PC-3 (cell line): ENCODE measurements at regions of chr3 and their contacts with region 1.

Region 1: DNA sequence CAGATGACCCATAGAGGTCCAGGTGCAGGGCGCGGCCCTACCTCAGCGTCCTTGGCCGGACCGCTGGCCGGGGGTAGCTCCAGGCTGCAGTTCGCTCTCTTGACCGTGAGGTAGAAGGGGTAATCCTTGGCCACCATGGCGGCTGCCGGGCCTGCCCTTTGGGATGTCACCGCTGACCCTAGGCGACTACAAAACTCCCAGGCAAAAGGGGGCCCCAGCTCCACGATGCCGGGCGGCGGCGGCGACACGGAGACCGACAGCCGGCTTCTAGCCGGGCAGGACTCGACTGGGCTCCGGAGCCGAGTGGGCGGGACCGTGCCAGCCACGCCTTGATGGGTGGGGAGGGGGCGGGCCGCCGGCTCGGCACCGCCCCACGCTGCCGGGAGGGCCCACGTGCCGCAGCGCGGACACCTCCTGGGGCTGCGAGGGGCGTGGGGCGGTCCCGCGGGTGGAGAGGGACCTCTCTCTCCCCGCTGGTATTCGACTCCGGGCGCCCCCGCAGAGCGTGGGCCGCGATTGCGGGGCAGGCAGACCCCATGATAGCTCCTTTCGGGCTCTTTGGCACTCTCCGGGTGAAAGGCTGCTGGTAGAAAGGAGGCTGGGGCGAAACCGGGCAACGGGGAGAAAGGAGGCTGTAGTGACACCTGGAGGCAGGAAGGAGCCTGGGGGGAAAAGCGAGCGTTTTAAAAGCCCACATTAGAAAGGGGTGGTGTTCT is at the start of gene ARHGEF3:
- DNase-seq: peak; percentile 88
- ATAC-seq: peak; percentile 91
- H3K4me3 ChIP-seq: peak within 1 kb of the TSS; percentile 73
- H3K27ac ChIP-seq: 0 out of 2 replicates have a peak within 1 kb of the TSS, but pooled peaks have one; percentile 31
- H3K4me1 ChIP-seq: peaks cover 21% of the 10 kb centered on the region
- H3K27me3 ChIP-seq: no peaks in the 10 kb centered on the region
- CTCF ChIP-seq: peak; percentile 71
- total RNA-seq, gene ARHGEF3: 8.7 and 12.6 TPM in 2 replicates

Region 2: GRCh38 chr3:56720849-56721248 is 81.0 kb before region 1 on chr3:
- CTCF ChIA-PET with region 1: no interaction called
- POLR2A ChIA-PET with region 1: no interaction called
- intact Hi-C with region 1: no loop called
- DNase-seq: no peak
- ATAC-seq: peak; percentile 31; the same call in 1 of the 2 replicates
- H3K4me3 ChIP-seq: no peak overlapping the region
- H3K27ac ChIP-seq: no peak overlapping the region
- H3K4me1 ChIP-seq: no peaks in the 10 kb centered on the region
- H3K27me3 ChIP-seq: no peaks in the 10 kb centered on the region
- CTCF ChIP-seq: no peak

Region 3: DNA sequence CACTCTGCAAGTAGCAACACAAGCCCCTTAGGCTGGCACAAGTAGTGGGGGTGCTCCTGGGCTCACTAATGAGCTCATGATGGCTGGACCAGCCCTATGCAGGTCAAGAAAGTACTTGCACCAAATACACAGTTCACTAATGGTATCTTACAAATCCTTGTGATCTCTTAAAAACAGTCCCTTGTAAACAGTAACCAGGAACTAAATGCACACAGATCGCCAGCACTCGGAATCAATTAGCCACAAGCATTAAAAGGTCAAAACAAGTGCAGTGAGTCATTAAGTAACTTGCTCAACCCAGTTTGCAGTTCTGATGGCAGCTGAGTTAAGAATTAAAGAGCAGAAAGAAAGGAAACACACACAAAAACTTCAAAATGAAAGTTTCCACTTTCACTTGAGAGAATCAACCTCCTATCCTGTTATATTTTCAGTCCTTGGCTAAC is 43.3 kb before region 1 on chr3:
- CTCF ChIA-PET with region 1: interaction called, 3 read pairs
- POLR2A ChIA-PET with region 1: interaction called, 3 read pairs
- intact Hi-C with region 1: loop called (anchors 1 kb)
- DNase-seq: peak; percentile 84
- ATAC-seq: peak; percentile 98
- H3K4me3 ChIP-seq: no peak overlapping the region
- H3K27ac ChIP-seq: peak overlapping the region; percentile 18
- H3K4me1 ChIP-seq: peaks cover 10% of the 10 kb centered on the region
- H3K27me3 ChIP-seq: no peaks in the 10 kb centered on the region
- CTCF ChIP-seq: no peak

Region 4: DNA sequence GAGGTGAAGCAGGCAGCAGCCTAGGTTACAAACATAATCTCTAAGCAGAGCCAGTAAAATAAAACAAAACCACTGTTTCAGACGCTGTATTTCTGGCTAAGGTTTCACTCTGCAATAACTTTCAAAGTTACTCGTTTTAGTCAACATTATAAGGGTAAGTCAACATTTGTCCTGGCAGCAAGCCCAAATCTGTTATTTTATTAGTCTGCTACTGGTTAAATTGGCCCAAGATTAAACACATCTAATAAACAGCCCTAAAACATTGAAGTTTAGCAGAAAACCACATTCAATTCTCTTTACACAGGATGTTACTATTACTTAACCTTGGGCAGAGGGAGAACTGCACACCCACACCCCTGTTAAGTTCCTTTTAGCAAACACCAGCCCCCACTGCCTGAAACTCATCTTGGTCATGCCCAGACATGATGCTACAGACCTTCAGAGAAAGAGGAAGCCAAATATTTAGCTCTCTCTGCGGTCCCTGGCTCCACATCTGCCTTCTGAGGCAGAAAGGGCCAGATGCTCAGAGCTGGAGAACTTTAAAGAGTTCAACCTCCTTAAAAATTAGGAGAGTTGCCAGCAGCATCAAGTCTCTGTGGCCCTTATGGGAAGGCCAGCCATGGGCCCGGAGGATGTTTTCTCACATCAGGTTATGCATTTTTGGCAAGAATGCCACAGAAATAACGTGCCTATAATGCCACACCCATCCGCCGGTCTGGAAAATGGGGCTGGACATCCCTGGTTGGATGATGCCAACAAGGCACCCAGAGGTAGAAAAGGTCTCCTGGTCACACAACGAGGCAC is 18.0 kb before region 1 on chr3:
- CTCF ChIA-PET with region 1: interaction called, 5 read pairs
- POLR2A ChIA-PET with region 1: no interaction called
- intact Hi-C with region 1: loop called (anchors 2 kb)
- DNase-seq: peak; percentile 97
- ATAC-seq: peak; percentile 95
- H3K4me3 ChIP-seq: no peak overlapping the region
- H3K27ac ChIP-seq: peak overlapping the region; percentile 35
- H3K4me1 ChIP-seq: peaks cover 23% of the 10 kb centered on the region
- H3K27me3 ChIP-seq: no peaks in the 10 kb centered on the region
- CTCF ChIP-seq: no peak

Region 5: DNA sequence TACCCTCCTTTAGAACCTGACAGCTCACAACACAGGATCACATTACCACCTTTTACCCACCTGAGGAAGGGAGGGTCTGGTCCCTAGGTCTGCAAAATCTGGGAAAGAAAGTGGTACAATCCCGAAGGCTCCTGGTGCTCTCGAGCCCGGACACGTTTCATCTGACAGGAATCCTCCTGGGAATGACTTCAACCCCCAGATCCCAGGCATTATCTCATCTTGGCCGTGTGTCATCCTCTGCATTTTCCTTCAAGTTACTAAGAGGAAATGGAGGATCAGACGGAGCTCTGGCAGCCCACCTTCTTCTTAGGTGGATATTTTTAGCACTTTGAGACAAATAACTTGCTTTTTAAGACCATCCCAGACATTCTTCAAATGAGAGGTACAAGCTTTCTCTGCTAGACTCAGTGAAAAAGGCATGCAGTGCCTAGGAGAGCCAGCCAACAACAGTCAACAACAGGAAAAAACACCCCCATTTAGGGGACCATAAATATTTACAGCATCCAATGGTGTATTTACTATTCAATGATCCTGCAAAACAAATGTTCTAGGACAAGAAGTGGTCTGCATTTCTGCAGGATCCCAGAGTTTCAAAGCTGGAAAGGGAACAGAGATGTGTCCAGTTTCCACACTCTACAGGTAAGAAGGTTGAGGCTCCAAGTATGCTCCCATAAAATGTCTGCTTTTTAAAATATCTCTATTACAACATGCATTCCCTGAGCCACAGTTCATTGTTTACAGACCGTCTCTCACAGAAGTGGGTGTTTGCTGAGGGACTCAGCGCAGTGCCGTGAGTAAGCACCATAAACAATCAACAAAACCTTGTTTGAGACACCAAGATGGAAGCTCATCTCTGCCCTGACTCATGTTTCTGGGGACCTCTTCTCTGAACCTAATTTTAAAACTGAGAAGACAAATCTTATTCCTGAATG is 38.2 kb after region 1 on chr3:
- CTCF ChIA-PET with region 1: interaction called, 3 read pairs
- POLR2A ChIA-PET with region 1: interaction called, 4 read pairs
- intact Hi-C with region 1: loop called (anchors 1 kb)
- DNase-seq: peak; percentile 92
- ATAC-seq: peak; percentile 94
- H3K4me3 ChIP-seq: peak overlapping the region; percentile 11; the same call in 1 of the 2 replicates
- H3K27ac ChIP-seq: peak overlapping the region; percentile 87
- H3K4me1 ChIP-seq: peaks cover 34% of the 10 kb centered on the region
- H3K27me3 ChIP-seq: no peaks in the 10 kb centered on the region
- CTCF ChIP-seq: no peak

Region 6: DNA sequence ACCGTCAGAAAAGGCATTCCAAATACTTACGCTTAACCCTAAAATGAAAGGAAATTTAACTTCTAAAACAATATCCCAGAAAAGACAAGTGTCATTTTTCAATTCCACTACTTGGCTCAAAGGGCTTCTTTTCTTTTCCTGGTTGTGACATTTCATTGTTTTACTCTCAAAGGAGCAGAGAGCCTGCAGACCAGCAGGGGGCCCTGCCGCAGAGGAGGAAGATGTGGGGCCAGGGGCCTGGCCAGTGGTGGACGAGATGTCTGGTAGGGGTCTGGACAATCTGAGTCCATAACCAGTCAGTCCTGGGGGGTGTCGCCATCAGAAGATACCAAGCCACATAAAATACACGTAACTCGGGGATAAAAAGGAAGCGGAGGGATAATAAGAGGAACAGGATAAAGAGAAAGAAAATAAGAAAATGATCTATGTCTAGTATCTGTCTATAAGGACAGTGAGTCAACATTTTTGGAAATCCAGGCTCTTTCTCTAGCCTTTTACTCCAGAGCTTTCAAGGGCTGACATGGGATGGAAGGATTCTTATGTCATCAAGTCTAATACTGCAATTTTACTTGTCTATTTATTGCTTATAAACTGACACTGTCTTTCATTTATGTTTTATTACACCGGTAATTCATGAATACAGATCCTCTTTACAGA is 54.2 kb after region 1 on chr3:
- CTCF ChIA-PET with region 1: no interaction called
- POLR2A ChIA-PET with region 1: no interaction called
- intact Hi-C with region 1: loop called (anchors 5 kb)
- DNase-seq: peak; percentile 46
- ATAC-seq: peak; percentile 72
- H3K4me3 ChIP-seq: no peak overlapping the region
- H3K27ac ChIP-seq: no peak overlapping the region
- H3K4me1 ChIP-seq: peaks cover 13% of the 10 kb centered on the region
- H3K27me3 ChIP-seq: no peaks in the 10 kb centered on the region
- CTCF ChIP-seq: peak; percentile 94